ENCODE measurements at regions of chr10 and their contacts with region 1.

Region 1: DNA sequence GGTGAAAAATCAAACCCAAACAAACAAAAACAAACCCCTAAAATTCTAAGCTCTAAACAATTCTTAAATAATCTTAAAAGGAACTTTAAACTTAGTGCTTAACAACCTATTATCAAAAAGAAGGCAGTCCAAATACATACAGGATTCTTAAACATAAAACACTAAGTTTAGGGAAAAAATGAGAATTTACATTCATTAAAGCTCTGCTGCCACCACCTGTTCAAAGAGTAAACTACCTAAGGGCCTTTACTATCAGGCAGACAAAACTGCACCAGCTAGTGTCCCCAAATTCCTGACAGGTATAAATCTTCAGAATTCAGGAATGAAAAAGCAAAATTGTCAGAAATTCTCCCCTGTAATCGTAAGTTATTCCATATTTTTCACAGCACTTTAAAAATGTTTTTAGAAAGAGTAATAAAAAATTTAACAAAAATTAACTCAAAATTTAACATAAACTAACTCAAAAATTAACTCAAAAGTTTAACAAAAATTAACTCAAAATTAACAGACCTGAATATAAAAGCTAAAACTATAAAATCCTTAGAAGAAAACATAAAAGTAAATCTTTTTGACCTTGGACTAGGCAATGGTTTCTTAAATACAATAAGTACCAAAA is 55.1 kb downstream of the PDZD8 start:
- DNase-seq: peak in 1 of 7 donors; percentile 14
- H3K4me3 ChIP-seq: no peak overlapping the region
- H3K27ac ChIP-seq: no peak overlapping the region
- H3K4me1 ChIP-seq: no peaks in the 10 kb centered on the region
- H3K27me3 ChIP-seq: no peaks in the 10 kb centered on the region
- CTCF ChIP-seq: peak; percentile 26 to 72 (median 56)
- POLR2A ChIP-seq: no peak

Region 2: GRCh38 chr10:117216611-117217195 is 103.5 kb before region 1 on chr10:
- intact Hi-C with region 1: loop called (anchors 5 to 10 kb)
- DNase-seq: peak; percentile 38 to 73 (median 66)
- H3K4me3 ChIP-seq: peak overlapping the region in 2 of 4 donors; percentile 22 to 48
- H3K27ac ChIP-seq: no peak overlapping the region
- H3K4me1 ChIP-seq: peaks cover 5 to 12% of the 10 kb centered on the region in 2 donors
- H3K27me3 ChIP-seq: peaks cover 10% of the 10 kb centered on the region
- CTCF ChIP-seq: peak; percentile 98 to 100 (median 100)
- POLR2A ChIP-seq: no peak